Activated T-helper 2 cell treated with anti-CD3 and anti-CD28 coated beads, Interferon-gamma antibody, Interleukin-2, Interleukin-4, amounts not matched to agents 10 μg/mL and 5 μg/mL and 100 μg/mL, durations not matched to agents 14 hours and 24 hours and 36 hours (primary cell): ENCODE measurements at regions of chr1 and their contacts with region 1.

Region 1: GRCh38 chr1:8947127-8947691 is 1.5 kb downstream of the CA6 start:
- DNase-seq: no peak
- H3K4me3 Mint-ChIP-seq: peak overlapping the region; percentile 33
- H3K27ac Mint-ChIP-seq: peak overlapping the region; percentile 96
- H3K4me1 Mint-ChIP-seq: peaks cover 55% of the 10 kb centered on the region
- H3K27me3 Mint-ChIP-seq: no peaks in the 10 kb centered on the region

Region 2: GRCh38 chr1:8970870-8971337 is 23.7 kb after region 1 on chr1:
- intact Hi-C with region 1: loop called (anchors 2 kb)
- DNase-seq: peak; percentile 45
- H3K4me3 Mint-ChIP-seq: peak overlapping the region; percentile 90
- H3K27ac Mint-ChIP-seq: peak overlapping the region; percentile 93
- H3K4me1 Mint-ChIP-seq: peaks cover 41% of the 10 kb centered on the region
- H3K27me3 Mint-ChIP-seq: no peaks in the 10 kb centered on the region

Region 3: GRCh38 chr1:9078015-9078750 is 131.0 kb after region 1 on chr1:
- intact Hi-C with region 1: no loop called
- DNase-seq: peak; percentile 31
- H3K4me3 Mint-ChIP-seq: no peak overlapping the region
- H3K27ac Mint-ChIP-seq: no peak overlapping the region
- H3K4me1 Mint-ChIP-seq: peaks cover 49% of the 10 kb centered on the region
- H3K27me3 Mint-ChIP-seq: peaks cover 25% of the 10 kb centered on the region

Region 4: DNA sequence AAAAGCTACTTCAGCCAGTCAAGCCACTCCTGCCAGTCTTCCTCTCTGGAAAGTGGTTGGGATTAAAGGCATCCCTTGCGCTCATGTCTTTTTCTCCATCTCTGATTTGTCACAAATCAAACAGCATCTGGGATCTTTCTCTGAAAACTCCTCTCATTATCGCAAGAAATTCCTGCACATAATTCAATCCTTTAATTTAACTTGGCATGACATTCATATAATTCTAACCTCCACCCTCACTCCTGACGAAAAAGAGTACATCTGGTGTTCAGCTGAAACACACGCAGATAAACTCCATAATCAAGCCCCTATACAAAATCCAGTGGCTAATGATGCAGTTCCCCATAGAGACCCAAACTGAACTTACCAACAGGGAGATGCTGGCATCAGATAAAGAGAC is 141.6 kb after region 1 on chr1:
- intact Hi-C with region 1: no loop called
- DNase-seq: no peak
- H3K4me3 Mint-ChIP-seq: no peak overlapping the region
- H3K27ac Mint-ChIP-seq: no peak overlapping the region
- H3K4me1 Mint-ChIP-seq: peaks cover 4% of the 10 kb centered on the region
- H3K27me3 Mint-ChIP-seq: peaks cover 20% of the 10 kb centered on the region